ENCODE measurements at regions of chr7 and their contacts with region 1.

Region 1: DNA sequence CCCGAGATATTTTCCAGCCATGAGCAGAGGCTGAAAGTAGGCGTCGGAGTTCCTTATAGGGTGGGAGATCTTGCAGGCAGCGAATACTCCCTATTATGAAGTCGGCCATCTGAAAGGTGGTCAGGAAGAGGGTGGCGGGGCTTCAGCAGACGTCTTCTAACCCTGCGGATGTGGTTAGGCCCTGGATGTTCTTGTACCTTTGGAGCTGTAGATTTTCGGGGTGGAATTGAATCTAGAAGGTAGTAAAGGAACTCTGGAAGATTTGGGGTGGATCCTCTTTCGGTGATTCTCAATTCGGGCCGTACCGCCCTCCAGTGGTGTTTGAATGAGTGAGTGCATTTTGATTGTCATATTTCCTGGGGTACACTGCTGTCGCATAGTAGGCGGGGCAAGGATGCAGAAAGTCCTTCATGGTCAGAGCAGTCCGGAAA is 635 bp downstream of the NUP205 start:
- DNase-seq: peak; percentile 83
- ATAC-seq: peak; percentile 62
- H3K4me3 Mint-ChIP-seq: no peak overlapping the region
- H3K27ac Mint-ChIP-seq: no peak overlapping the region
- H3K4me1 Mint-ChIP-seq: peaks cover 18% of the 10 kb centered on the region
- H3K27me3 Mint-ChIP-seq: no peaks in the 10 kb centered on the region
- CTCF ChIP-seq: peak; percentile 71

Region 2: GRCh38 chr7:135386181-135386580 is 172.2 kb before region 1 on chr7:
- CTCF ChIA-PET with region 1: no interaction called
- POLR2A ChIA-PET with region 1: no interaction called
- intact Hi-C with region 1: no loop called
- DNase-seq: no peak
- ATAC-seq: no peak
- H3K4me3 Mint-ChIP-seq: no peak overlapping the region
- H3K27ac Mint-ChIP-seq: no peak overlapping the region
- H3K4me1 Mint-ChIP-seq: no peaks in the 10 kb centered on the region
- H3K27me3 Mint-ChIP-seq: no peaks in the 10 kb centered on the region
- CTCF ChIP-seq: no peak

Region 3: DNA sequence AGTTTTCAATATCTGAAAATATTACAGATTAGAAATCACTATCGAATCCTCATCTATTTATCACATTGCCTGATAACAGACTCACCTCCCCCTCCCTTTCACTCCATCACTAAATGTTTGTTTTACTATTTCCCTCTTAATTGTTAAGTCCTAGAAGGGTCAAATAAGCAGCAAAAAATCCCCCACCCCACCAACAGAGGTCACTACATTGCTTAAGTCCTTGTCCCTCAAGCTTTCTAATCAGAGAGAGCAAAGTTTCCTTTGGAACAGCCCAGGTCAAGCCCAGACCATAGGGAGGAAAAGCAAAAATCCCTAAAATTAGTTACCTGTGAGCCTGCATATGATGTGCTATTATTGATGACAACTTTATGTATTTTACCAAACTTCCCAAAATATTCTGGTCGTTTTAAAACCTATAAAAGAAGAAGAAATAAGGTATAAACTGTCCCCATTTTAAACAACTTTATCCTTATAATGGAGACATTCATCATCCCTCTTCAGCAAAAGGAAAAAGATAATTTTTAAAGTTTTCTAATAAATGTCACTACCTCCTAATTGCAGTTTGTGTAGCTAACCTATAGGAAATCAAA is 143.4 kb before region 1 on chr7:
- CTCF ChIA-PET with region 1: no interaction called
- POLR2A ChIA-PET with region 1: interaction called, 4 read pairs
- intact Hi-C with region 1: loop called (anchors 10 kb)
- DNase-seq: peak; percentile 73
- ATAC-seq: peak; percentile 39
- H3K4me3 Mint-ChIP-seq: no peak overlapping the region
- H3K27ac Mint-ChIP-seq: no peak overlapping the region
- H3K4me1 Mint-ChIP-seq: peaks cover 2% of the 10 kb centered on the region
- H3K27me3 Mint-ChIP-seq: no peaks in the 10 kb centered on the region
- CTCF ChIP-seq: peak; percentile 63

Region 4: GRCh38 chr7:135509903-135510602 is 48.3 kb before region 1 on chr7 and contains the start of gene CNOT4:
- CTCF ChIA-PET with region 1: interaction called, 5 read pairs
- POLR2A ChIA-PET with region 1: interaction called, 4 read pairs
- intact Hi-C with region 1: loop called (anchors 1 kb)
- DNase-seq: peak; percentile 97
- ATAC-seq: peak; percentile 92
- H3K4me3 Mint-ChIP-seq: no peak within 1 kb of the TSS
- H3K27ac Mint-ChIP-seq: no peak within 1 kb of the TSS
- H3K4me1 Mint-ChIP-seq: peaks cover 18% of the 10 kb centered on the region
- H3K27me3 Mint-ChIP-seq: no peaks in the 10 kb centered on the region
- CTCF ChIP-seq: no peak
- total RNA-seq, gene CNOT4: 22.0 to 23.6 TPM

Region 5: DNA sequence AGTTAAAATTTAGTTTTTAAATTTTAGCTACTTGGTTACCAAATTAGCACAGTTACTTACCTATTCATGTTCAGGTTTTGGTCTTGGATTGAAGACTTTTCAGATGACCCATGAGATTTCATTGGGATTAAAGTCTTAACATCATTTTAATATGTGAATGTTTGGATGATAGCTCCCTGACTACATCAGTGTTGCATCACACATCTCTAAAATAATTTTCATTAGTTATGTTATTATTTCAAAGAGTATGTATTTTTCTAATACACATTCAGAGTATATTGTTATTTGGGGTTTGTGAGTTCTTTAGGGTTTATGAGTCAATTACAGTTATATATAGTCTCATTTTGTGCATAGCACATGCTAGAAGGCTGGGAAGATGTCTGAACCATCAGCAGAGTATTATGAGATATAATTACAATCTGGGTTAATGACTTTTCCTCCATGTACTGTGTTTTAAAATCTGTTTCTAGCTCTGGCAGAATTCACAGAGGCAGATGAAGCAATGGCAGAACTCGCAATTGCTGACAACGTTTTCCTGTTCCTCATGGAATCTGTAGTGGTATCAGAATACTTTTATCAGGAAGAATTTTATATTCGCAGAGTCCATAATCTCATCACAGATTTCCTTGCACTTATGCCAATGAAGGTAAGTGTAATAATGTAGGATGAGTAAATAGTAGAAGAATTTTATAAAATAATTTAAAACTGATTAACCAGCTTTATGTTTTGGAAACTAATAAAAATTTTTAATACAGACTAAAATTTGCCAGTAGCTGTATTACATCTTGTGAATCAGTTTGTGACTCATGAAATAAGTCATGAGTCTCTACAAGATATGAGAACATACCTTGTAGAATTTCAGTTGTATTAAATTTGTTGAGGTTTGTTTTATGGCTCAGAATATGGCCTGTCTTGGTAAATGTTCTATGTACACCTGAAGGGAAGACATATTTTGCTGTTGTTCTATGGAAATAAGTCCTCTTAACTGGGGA is 26.3 kb after region 1 on chr7:
- CTCF ChIA-PET with region 1: no interaction called
- POLR2A ChIA-PET with region 1: no interaction called
- intact Hi-C with region 1: no loop called
- DNase-seq: no peak
- ATAC-seq: no peak
- H3K4me3 Mint-ChIP-seq: no peak overlapping the region
- H3K27ac Mint-ChIP-seq: no peak overlapping the region
- H3K4me1 Mint-ChIP-seq: no peaks in the 10 kb centered on the region
- H3K27me3 Mint-ChIP-seq: no peaks in the 10 kb centered on the region
- CTCF ChIP-seq: no peak

Region 6: GRCh38 chr7:135662373-135663114 is 104.2 kb after region 1 on chr7 and contains the start of gene STMP1:
- CTCF ChIA-PET with region 1: no interaction called
- POLR2A ChIA-PET with region 1: interaction called, 13 read pairs
- intact Hi-C with region 1: no loop called
- DNase-seq: peak; percentile 97
- ATAC-seq: peak; percentile 95
- H3K4me3 Mint-ChIP-seq: peak within 1 kb of the TSS; percentile 86
- H3K27ac Mint-ChIP-seq: peak within 1 kb of the TSS; percentile 91
- H3K4me1 Mint-ChIP-seq: peaks cover 41% of the 10 kb centered on the region
- H3K27me3 Mint-ChIP-seq: no peaks in the 10 kb centered on the region
- CTCF ChIP-seq: peak; percentile 59
- total RNA-seq, gene STMP1: 21.1 to 23.4 TPM